IMR-90 (cell line): ENCODE measurements at regions of chrX and their contacts with region 1.

Region 1: GRCh38 chrX:35625714-35626113 is 172.4 kb upstream of the MAGEB16 start:
- DNase-seq: no peak
- ATAC-seq: no peak
- H3K4me3 ChIP-seq: no peak overlapping the region
- H3K27ac ChIP-seq: no peak overlapping the region
- H3K4me1 ChIP-seq: no peaks in the 10 kb centered on the region
- H3K27me3 ChIP-seq: no peaks in the 10 kb centered on the region
- CTCF ChIP-seq: no peak
- POLR2A ChIP-seq: no peak
- RAD21 ChIP-seq: no peak

Region 2: GRCh38 chrX:36241397-36241796 is 615.7 kb after region 1 on chrX:
- CTCF ChIA-PET with region 1: interaction called, 12 read pairs
- POLR2A ChIA-PET with region 1: no interaction called
- dilution Hi-C with region 1: no loop called
- in situ Hi-C with region 1: no loop called
- intact Hi-C with region 1: no loop called
- DNase-seq: no peak
- ATAC-seq: no peak
- H3K4me3 ChIP-seq: no peak overlapping the region
- H3K27ac ChIP-seq: no peak overlapping the region
- H3K4me1 ChIP-seq: no peaks in the 10 kb centered on the region
- H3K27me3 ChIP-seq: no peaks in the 10 kb centered on the region
- CTCF ChIP-seq: no peak
- POLR2A ChIP-seq: no peak
- RAD21 ChIP-seq: no peak